ENCODE measurements at regions of chr16 and their contacts with region 1.

Region 1: DNA sequence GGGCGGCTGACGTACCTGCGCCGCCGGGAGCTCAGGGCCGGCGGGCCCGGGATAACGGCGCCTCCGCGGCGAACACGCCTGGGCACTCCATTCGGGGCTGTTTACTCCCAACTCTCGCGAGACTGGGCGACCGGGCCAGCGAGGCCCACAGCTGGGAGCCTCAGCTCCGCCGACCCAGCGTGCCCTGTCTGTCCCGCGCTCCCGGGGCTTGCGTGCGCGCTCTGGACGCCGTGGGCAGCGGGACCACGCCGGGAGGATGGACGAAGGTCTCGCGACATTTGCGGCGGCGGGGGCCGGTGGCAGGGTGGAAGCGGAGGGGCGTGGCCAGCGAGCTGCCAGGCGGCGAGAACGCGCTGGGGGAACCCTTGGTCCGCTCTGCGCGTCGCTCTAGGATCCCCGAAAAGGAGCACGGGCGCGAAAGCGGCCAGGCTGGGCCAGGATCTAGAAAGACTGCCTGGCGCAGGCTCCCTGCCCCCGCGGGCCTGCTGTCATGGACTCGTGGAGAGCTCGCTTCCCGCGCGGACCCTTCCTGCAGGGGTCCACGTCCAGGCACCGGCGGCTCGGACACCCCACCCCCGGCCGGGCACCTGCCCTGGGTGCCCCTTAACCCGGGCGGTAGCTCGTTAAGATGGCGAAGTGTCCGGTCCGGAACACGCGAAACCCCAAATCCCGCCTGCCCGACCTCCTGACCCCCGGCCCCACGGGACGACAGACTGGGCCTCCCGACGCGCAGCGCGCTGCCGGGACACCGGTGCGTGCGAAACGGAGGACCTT is at the start of gene MBTPS1:
- DNase-seq: peak; percentile 98
- H3K4me3 Mint-ChIP-seq: peak within 1 kb of the TSS; percentile 92
- H3K27ac Mint-ChIP-seq: peak within 1 kb of the TSS; percentile 95
- H3K4me1 Mint-ChIP-seq: peaks cover 22% of the 10 kb centered on the region
- H3K27me3 Mint-ChIP-seq: no peaks in the 10 kb centered on the region
- total RNA-seq, gene MBTPS1: 54.5 and 60.0 TPM in 2 replicates

Region 2: GRCh38 chr16:83898463-83899271 is 218.2 kb before region 1 on chr16 and contains the start of gene MLYCD:
- intact Hi-C with region 1: loop called (anchors 1 kb)
- DNase-seq: peak; percentile 73
- H3K4me3 Mint-ChIP-seq: peak within 1 kb of the TSS; percentile 94
- H3K27ac Mint-ChIP-seq: peak within 1 kb of the TSS; percentile 77
- H3K4me1 Mint-ChIP-seq: peaks cover 27% of the 10 kb centered on the region
- H3K27me3 Mint-ChIP-seq: peaks cover 10% of the 10 kb centered on the region
- total RNA-seq, gene MLYCD: 5.0 and 6.1 TPM in 2 replicates

Region 3: GRCh38 chr16:84084570-84085270 is 32.2 kb before region 1 on chr16:
- intact Hi-C with region 1: loop called (anchors 1 kb)
- DNase-seq: peak; percentile 53
- H3K4me3 Mint-ChIP-seq: no peak overlapping the region
- H3K27ac Mint-ChIP-seq: no peak overlapping the region
- H3K4me1 Mint-ChIP-seq: peaks cover 43% of the 10 kb centered on the region
- H3K27me3 Mint-ChIP-seq: no peaks in the 10 kb centered on the region

Region 4: GRCh38 chr16:84098936-84099335 is 18.0 kb before region 1 on chr16:
- intact Hi-C with region 1: loop called (anchors 1 kb)
- DNase-seq: no peak
- H3K4me3 Mint-ChIP-seq: no peak overlapping the region
- H3K27ac Mint-ChIP-seq: no peak overlapping the region
- H3K4me1 Mint-ChIP-seq: peaks cover 15% of the 10 kb centered on the region
- H3K27me3 Mint-ChIP-seq: no peaks in the 10 kb centered on the region

Region 5: DNA sequence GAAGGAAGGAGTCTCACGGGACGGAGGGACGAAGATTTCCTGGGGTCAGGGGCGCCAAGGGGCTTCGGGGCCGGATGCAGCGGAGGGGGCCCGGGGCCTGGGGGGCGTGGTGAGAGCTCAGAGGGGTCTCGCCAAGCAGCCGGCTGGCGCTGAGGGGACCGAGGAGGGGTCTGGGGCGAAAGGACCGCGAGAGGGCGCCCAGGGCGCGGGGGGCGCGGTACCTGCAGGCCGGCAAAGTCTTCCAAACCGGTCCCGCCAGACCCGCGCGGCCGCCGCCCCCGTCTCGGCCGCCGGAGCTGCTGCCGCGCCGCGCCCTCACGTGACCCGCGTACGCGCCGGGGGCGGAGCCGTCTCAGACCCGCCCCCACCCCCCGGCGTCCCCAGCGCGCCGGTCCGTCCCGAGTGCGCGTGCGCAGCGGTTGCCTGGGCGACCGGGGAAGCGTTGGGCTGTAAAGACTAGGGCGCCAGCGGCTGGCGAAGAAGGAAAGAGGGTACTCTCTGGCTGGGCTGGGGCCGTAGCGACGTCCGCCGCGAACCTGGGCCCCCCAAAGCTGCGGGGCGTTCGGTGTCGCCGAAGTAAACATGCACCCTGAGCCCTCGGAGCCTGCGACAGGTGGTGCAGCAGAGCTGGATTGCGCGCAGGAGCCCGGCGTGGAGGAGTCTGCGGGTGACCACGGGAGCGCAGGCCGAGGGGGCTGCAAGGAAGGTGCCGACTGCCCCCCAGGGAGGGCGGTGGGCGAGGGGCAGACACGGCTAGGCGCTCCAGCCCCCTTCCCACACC is 28.1 kb after region 1 on chr16 and contains the starts of genes DNAAF1 and HSDL1:
- intact Hi-C with region 1: loop called (anchors 1 kb)
- DNase-seq: peak; percentile 92
- H3K4me3 Mint-ChIP-seq: peak within 1 kb of the TSS; percentile 97
- H3K27ac Mint-ChIP-seq: peak within 1 kb of the TSS; percentile 86
- H3K4me1 Mint-ChIP-seq: peaks cover 7% of the 10 kb centered on the region
- H3K27me3 Mint-ChIP-seq: peaks cover 19% of the 10 kb centered on the region
- total RNA-seq, gene DNAAF1: not detected in 2 replicates
- total RNA-seq, gene HSDL1: 19.2 and 23.1 TPM in 2 replicates

Region 6: DNA sequence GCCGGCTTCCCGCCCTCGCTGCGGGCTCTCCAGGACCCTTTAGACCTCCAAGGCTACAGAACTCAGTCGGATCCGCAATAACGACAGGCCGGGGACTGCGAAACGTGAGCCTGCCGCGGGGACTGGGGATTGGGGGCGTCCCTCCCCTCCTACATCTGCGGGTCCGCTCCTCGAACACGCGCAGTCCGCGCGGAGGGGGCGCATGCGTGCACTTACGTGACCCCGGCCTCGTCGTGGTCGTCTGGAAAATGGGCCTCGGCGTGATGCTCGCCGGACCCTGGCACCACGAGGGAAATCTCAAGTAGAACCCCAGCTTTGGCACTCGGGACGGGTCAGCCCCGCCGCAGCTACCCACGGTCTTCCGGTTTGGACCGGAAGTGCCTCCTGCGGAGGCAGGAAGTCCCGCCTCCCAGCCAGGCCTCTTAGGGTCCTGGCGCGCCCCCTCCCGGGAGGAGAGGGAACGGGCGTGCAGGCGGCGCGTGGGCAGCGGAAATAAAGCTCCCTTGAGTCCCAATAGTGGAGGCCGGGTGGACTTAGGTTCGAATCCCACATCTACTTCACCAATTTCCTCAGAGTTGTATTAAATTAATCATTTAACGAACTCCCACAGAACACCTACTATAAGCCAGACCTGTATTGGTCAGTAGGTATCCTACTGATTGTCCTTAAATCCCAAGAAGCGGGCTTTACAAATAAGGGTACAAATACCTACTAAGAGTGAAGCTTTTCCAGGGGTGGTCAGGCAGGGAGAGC is 70.0 kb after region 1 on chr16 and contains the start of gene TAF1C:
- intact Hi-C with region 1: loop called (anchors 1 kb)
- DNase-seq: peak; percentile 86
- H3K4me3 Mint-ChIP-seq: peak within 1 kb of the TSS; percentile 95
- H3K27ac Mint-ChIP-seq: peak within 1 kb of the TSS; percentile 89
- H3K4me1 Mint-ChIP-seq: peaks cover 6% of the 10 kb centered on the region
- H3K27me3 Mint-ChIP-seq: no peaks in the 10 kb centered on the region
- total RNA-seq, gene TAF1C: 67.9 and 74.4 TPM in 2 replicates

Region 7: GRCh38 chr16:84504420-84505248 is 387.7 kb after region 1 on chr16 and contains the start of gene MEAK7:
- intact Hi-C with region 1: loop called (anchors 10 kb)
- DNase-seq: peak; percentile 97
- H3K4me3 Mint-ChIP-seq: peak within 1 kb of the TSS; percentile 85
- H3K27ac Mint-ChIP-seq: peak within 1 kb of the TSS; percentile 81
- H3K4me1 Mint-ChIP-seq: peaks cover 46% of the 10 kb centered on the region
- H3K27me3 Mint-ChIP-seq: no peaks in the 10 kb centered on the region
- total RNA-seq, gene MEAK7: 10.6 and 10.9 TPM in 2 replicates

Measured in activated T-helper 1 cell treated with anti-CD3 and anti-CD28 coated beads, Interleukin-12 subunit alpha, Interleukin-12 subunit beta, Interleukin-2, Interleukin-4 antibody, amounts not matched to agents 30 ng/mL and 10 ng/mL and 1 ng/mL, durations not matched to agents 14 hours and 24 hours and 36 hours (primary cell).